ENCODE measurements at regions of chr13 and their contacts with region 1.

Region 1: GRCh38 chr13:90792335-90792734 is 555.2 kb upstream of the MIR17HG start:
- DNase-seq: no peak
- H3K4me3 ChIP-seq: no peak overlapping the region
- H3K27ac ChIP-seq: no peak overlapping the region
- H3K4me1 ChIP-seq: no peaks in the 10 kb centered on the region; the same call in 1 of the 2 replicates
- H3K27me3 ChIP-seq: no peaks in the 10 kb centered on the region
- CTCF ChIP-seq: no peak

Region 2: GRCh38 chr13:90750957-90751505 is 41.3 kb before region 1 on chr13:
- CTCF ChIA-PET with region 1: no interaction called
- POLR2A ChIA-PET with region 1: no interaction called
- intact Hi-C with region 1: loop called (anchors 5 kb)
- DNase-seq: no peak
- H3K4me3 ChIP-seq: no peak overlapping the region
- H3K27ac ChIP-seq: no peak overlapping the region
- H3K4me1 ChIP-seq: no peaks in the 10 kb centered on the region
- H3K27me3 ChIP-seq: no peaks in the 10 kb centered on the region
- CTCF ChIP-seq: no peak